Aorta (tissue), 5 donors: ENCODE measurements at regions of chr1 and their contacts with region 1.

Region 1: DNA sequence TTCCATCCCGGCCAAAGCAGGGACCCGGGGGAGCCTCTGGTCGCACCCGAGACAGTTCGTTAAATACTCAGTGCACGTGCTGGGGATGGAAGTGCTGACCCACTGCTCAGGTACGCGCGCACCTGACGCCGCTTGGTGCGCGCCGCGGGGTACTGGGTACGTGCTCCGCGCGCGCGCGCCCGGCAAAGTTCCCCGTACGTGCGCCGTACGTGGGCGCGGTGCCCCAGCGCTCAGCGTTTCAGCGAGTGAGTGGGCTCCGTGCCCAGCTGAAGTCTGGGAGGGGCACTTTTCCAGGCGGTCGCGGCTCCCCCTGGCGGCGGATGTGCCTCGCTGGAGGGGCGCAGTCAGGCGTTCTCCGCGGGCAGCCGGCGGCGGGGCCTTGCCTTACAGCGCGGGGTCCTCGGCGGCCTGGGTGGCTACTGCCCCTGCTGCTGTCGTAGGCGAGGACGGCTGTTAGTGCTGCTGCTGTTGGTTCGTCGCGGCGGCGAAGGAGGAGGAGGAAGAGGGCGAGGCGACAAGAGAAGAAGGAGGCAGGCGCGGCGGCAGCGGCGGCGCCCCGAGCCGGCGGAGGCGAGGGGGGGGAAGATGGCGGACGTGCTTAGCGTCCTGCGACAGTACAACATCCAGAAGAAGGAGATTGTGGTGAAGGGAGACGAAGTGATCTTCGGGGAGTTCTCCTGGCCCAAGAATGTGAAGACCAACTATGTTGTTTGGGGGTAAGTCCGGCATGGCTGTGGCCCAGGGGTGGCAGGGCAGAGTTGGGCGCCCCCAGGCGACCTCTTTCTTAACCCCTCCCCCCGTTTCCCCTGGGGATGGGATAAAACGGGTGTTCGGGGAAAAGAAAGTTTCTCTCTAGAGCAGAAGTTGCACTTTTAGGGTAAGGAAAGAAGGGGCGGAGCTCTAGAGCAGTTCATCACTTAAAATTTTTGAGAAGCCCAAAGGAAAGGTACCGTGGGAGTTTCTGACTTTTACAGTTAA is at the start of gene CDC73:
- DNase-seq: peak; percentile 99 to 100
- ATAC-seq: peak; percentile 100
- H3K4me3 ChIP-seq: peak within 1 kb of the TSS; percentile 85 to 92
- H3K27ac ChIP-seq: peak within 1 kb of the TSS; percentile 53 to 68
- H3K4me1 ChIP-seq: peaks cover 0 to 5% of the 10 kb centered on the region in 2 donors
- H3K27me3 ChIP-seq: no peaks in the 10 kb centered on the region
- total RNA-seq, gene CDC73: 76.2 to 76.5 TPM

Region 2: DNA sequence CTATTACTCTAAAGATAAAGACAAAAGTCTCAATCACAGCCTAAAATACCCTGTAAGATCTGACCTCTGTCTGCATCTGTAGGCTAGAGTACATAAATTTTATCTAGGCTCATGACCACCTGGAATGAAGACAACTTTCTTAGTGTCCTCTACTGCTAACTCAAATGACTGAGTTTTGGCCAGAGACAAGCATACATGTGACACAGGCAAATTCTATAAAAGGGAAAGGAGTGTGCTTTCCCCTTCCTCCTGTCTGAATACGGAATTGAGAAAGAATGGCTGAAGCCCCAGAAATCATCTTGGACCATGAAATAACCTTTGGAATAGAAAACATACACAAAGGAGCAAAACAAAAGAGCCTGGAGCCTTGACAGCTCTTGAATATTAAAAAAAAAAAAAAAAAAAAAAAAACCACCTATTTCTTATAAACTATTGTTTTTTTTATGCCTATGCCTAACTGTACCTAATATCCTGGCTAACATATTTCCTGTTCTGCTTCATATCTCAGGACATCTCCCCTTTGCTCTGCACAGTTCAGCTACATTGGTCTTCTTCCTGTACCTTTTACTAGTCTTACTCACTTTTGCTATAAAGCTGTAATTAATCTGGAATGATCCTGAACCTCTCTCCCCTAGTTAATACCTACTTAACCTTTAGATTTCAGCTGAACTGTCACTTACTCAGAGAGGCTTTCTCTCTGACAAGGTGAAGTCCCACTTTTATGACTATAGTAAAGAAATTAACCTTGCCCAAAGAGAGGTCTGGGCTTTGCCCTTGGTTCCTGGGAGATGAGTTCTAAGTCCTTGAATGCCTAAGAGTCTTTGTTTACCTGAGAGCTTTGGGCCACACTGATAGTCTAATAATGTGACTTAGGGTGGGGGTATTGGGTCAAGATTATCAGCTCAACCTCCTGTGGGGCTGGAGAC is 78.9 kb before region 1 on chr1:
- intact Hi-C with region 1: no loop called
- DNase-seq: no peak
- ATAC-seq: no peak
- H3K4me3 ChIP-seq: no peak overlapping the region
- H3K27ac ChIP-seq: no peak overlapping the region
- H3K4me1 ChIP-seq: no peaks in the 10 kb centered on the region
- H3K27me3 ChIP-seq: no peaks in the 10 kb centered on the region

Region 3: DNA sequence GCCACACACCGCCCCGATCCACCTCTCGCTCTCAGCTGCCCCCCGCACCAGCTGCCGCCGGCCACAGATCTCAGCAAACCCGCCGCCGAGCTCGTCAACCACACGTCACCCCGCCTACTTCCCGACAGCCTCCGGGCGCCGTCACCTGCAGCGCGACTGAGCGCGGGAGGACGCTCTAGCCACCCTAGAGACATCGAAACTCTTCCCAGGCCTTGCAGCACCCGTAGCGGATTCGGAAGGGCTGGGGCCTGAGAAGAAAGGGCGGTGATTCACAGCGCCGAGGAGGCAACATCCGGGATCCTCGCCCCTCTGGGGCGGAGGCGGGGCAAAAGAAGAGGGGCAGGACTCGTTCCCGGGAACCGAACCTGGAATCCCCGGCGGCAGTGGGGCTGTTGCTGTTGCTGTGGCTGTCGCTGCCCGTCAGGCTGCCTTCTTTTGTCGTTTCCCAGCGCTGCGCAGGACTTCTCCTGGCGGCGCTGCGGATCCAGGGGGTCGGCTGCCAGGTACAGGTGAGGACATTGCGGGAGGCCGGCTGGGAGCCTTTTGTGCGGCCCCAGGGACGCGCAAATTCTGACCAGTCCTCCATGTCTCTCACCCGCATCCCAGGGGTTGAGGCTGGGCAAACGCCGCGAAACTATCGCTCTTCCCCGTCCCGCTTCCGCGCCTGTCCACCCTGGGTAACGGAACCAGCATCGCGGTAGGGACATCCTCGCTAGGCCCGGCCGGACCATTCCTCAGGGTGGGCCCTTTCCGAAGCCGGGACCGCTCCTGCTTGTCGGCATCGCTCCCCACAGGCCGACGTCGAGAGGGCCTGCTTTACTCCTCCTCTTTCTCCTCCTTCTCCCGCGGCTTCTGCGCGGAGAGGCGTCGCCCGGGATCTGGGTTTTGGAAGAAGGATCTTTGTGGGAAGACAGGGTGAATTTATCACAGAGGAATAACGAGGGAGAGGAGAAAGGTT is 62.4 kb before region 1 on chr1 and contains the starts of genes RO60 and UCHL5:
- intact Hi-C with region 1: loop called in 1 of 2 experiments (anchors 1 kb)
- DNase-seq: peak; percentile 98
- ATAC-seq: peak; percentile 99
- H3K4me3 ChIP-seq: peak within 1 kb of the TSS; percentile 62 to 73
- H3K27ac ChIP-seq: peak within 1 kb of the TSS; percentile 96 to 99
- H3K4me1 ChIP-seq: peaks cover 2 to 3% of the 10 kb centered on the region in 2 donors
- H3K27me3 ChIP-seq: no peaks in the 10 kb centered on the region
- total RNA-seq, gene RO60: 62.9 to 71.7 TPM
- total RNA-seq, gene UCHL5: 26.2 to 29.7 TPM

Region 4: DNA sequence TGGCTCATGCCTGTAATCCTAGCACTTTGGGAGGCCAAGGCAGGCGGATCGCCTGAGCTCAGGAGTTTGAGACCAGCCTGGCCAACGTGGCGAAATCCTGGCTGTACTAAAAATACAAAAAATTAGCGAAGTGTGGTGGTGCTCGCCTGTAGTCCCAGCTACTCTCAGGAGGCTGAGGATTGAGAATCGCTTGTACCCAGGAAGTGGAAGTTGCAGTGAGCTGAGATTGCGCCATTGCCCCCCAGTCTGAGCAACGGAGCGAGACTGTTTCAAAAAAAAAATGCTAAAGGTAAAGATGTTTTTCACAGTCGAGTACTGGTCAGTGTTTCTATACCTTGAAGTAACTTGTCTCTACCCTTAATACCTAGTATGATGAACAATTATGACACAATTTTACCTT is 27.8 kb before region 1 on chr1:
- intact Hi-C with region 1: loop called in 1 of 2 experiments (anchors 5 kb)
- DNase-seq: no peak
- ATAC-seq: no peak
- H3K4me3 ChIP-seq: no peak overlapping the region
- H3K27ac ChIP-seq: no peak overlapping the region
- H3K4me1 ChIP-seq: no peaks in the 10 kb centered on the region
- H3K27me3 ChIP-seq: no peaks in the 10 kb centered on the region

Region 5: GRCh38 chr1:193104906-193105820 is 16.7 kb before region 1 on chr1 and contains the start of gene GLRX2:
- intact Hi-C with region 1: loop called (anchors 1 to 2 kb)
- DNase-seq: peak; percentile 86 to 96
- ATAC-seq: peak; percentile 98
- H3K4me3 ChIP-seq: peak within 1 kb of the TSS; percentile 55 to 62
- H3K27ac ChIP-seq: peak within 1 kb of the TSS; percentile 28 to 83
- H3K4me1 ChIP-seq: no peaks in the 10 kb centered on the region
- H3K27me3 ChIP-seq: no peaks in the 10 kb centered on the region
- total RNA-seq, gene GLRX2: 13.4 to 14.4 TPM

Region 6: DNA sequence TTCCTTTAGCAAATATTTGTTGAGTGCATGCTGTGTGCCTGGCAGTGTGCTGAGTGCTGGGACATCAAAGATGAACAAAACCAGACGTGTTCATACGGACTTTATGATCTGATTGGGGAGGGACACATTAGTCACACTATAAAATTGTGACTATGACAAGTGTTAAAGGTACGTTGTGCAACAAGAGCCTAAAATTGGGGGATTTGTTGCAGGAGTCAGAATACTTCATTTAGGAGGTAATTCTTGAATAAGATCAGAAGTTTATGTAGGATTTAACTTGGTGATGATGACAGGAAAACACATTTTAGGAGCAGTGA is 34.9 kb after region 1 on chr1:
- intact Hi-C with region 1: no loop called
- DNase-seq: no peak
- ATAC-seq: no peak
- H3K4me3 ChIP-seq: no peak overlapping the region
- H3K27ac ChIP-seq: no peak overlapping the region
- H3K4me1 ChIP-seq: no peaks in the 10 kb centered on the region
- H3K27me3 ChIP-seq: no peaks in the 10 kb centered on the region

Region 7: DNA sequence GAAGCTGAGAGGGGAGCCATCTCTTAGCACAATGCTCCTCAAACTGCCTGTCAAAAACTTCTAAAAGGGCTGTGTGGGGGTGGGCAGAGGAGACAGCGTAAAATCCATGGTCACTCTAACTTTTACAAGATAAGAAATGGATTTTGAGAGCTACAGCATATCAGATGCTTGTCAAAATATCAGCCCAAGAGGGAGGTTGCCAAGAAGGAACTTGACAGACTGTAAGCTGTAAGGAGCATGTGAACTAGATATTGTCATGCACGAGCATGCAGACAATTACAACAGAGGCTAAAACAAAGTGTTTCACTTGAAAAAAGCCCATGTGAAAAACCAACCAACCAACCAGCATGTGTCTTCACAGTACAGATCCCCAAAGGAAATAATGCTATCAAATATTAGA is 171.8 kb after region 1 on chr1:
- intact Hi-C with region 1: no loop called
- DNase-seq: no peak
- ATAC-seq: no peak
- H3K4me3 ChIP-seq: no peak overlapping the region
- H3K27ac ChIP-seq: no peak overlapping the region
- H3K4me1 ChIP-seq: no peaks in the 10 kb centered on the region
- H3K27me3 ChIP-seq: no peaks in the 10 kb centered on the region

Region 8: DNA sequence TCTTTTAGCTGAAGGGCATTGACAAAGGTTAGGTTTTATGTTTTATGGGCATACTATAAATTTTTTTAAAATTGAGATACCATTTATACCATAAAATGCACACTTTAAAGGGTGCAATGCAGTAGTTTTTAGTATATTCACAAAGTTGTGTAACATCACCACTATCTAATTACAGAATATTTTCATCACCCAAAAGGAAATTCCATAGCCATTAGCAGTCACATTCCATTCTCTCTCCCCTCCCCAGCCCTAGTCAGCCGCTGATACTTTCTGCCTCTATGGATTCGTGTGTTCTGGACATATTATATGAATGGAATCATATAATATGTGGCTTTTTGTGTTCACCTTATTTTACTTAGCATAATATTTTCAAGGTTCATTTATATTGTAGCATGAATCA is 200.3 kb after region 1 on chr1:
- intact Hi-C with region 1: no loop called
- DNase-seq: no peak
- ATAC-seq: no peak
- H3K4me3 ChIP-seq: no peak overlapping the region
- H3K27ac ChIP-seq: no peak overlapping the region
- H3K4me1 ChIP-seq: no peaks in the 10 kb centered on the region
- H3K27me3 ChIP-seq: no peaks in the 10 kb centered on the region